ENCODE measurements at regions of chr12 and their contacts with region 1.

Region 1: GRCh38 chr12:51980051-51980808 is 26.5 kb upstream of the TAMALIN start:
- DNase-seq: peak; percentile 70 to 82
- H3K4me3 ChIP-seq: no peak overlapping the region
- H3K4me3 Mint-ChIP-seq: peak overlapping the region; percentile 32
- H3K27ac Mint-ChIP-seq: peak overlapping the region; percentile 87
- H3K4me1 ChIP-seq: peaks cover 52% of the 10 kb centered on the region
- H3K4me1 Mint-ChIP-seq: peaks cover 46% of the 10 kb centered on the region
- H3K27me3 ChIP-seq: no peaks in the 10 kb centered on the region
- H3K27me3 Mint-ChIP-seq: no peaks in the 10 kb centered on the region
- CTCF ChIP-seq: peak; percentile 96 to 97

Region 2: DNA sequence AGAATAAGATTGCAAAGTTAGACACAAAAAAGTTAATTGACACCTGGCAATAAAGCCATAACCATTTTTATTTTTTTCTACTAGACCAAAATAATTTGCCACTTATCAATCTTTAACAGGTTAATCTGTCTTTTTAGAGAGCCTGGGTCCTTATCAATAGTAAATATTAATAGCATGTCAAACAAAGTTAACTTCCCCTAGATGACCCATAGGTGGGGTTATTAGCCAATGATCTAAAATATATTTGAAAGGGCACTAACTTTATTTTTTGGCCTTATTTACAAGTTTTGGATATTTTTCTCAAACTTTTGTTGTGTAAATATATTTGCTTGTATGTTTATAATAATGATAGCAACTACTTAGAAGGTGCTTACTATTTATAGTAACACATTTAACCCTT is 88.4 kb before region 1 on chr12:
- CTCF ChIA-PET with region 1: interaction called, 26 read pairs
- POLR2A ChIA-PET with region 1: interaction called, 11 read pairs
- intact Hi-C with region 1: loop called (anchors 1 kb)
- DNase-seq: no peak
- H3K4me3 ChIP-seq: no peak overlapping the region
- H3K4me3 Mint-ChIP-seq: no peak overlapping the region
- H3K27ac Mint-ChIP-seq: no peak overlapping the region
- H3K4me1 ChIP-seq: peaks cover 13% of the 10 kb centered on the region; the same call in 1 of the 2 replicates
- H3K4me1 Mint-ChIP-seq: peaks cover 7% of the 10 kb centered on the region
- H3K27me3 ChIP-seq: no peaks in the 10 kb centered on the region
- H3K27me3 Mint-ChIP-seq: no peaks in the 10 kb centered on the region
- CTCF ChIP-seq: peak; percentile 54 to 56

Region 3: GRCh38 chr12:51926718-51927117 is 53.5 kb before region 1 on chr12:
- CTCF ChIA-PET with region 1: interaction called, 3 read pairs
- POLR2A ChIA-PET with region 1: no interaction called
- intact Hi-C with region 1: loop called (anchors 1 kb)
- DNase-seq: peak; percentile 69 to 70
- H3K4me3 ChIP-seq: no peak overlapping the region
- H3K4me3 Mint-ChIP-seq: no peak overlapping the region
- H3K27ac Mint-ChIP-seq: no peak overlapping the region
- H3K4me1 ChIP-seq: peaks cover 30% of the 10 kb centered on the region
- H3K4me1 Mint-ChIP-seq: peaks cover 26% of the 10 kb centered on the region
- H3K27me3 ChIP-seq: no peaks in the 10 kb centered on the region
- H3K27me3 Mint-ChIP-seq: no peaks in the 10 kb centered on the region
- CTCF ChIP-seq: peak; percentile 64 to 70

Region 4: GRCh38 chr12:51951199-51951842 is 28.9 kb before region 1 on chr12 and contains the start of gene ACVR1B:
- CTCF ChIA-PET with region 1: interaction called, 5 read pairs
- POLR2A ChIA-PET with region 1: interaction called, 4 read pairs
- intact Hi-C with region 1: loop called (anchors 1 kb)
- DNase-seq: peak; percentile 93 to 94
- H3K4me3 ChIP-seq: peak within 1 kb of the TSS; percentile 72
- H3K4me3 Mint-ChIP-seq: peak within 1 kb of the TSS; percentile 87
- H3K27ac Mint-ChIP-seq: peak within 1 kb of the TSS; percentile 78
- H3K4me1 ChIP-seq: peaks cover 28% of the 10 kb centered on the region
- H3K4me1 Mint-ChIP-seq: peaks cover 33% of the 10 kb centered on the region
- H3K27me3 ChIP-seq: no peaks in the 10 kb centered on the region
- H3K27me3 Mint-ChIP-seq: no peaks in the 10 kb centered on the region
- CTCF ChIP-seq: no peak
- total RNA-seq, gene ACVR1B: 92.7 and 112 TPM in 2 replicates

Region 5: DNA sequence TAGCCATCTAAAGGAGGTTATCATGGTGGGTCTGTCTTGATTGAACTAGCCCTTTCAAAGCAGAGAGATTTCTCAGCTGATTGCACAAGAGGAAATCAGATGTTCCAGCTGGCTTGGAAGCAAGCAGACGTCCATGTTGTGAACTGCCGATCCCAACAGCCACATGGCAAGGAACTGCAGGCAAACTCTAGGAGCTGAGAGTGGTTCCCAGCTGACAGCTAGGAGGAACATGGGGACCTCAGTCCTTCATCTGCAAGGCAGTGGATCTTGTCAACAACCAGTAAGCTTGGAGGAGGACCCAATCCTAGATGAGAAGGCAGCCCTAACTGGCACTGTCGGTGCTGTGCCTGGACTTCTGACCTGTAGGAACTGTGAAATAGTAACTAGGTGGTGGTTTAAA is 21.0 kb before region 1 on chr12:
- CTCF ChIA-PET with region 1: interaction called, 26 read pairs
- POLR2A ChIA-PET with region 1: interaction called, 27 read pairs
- intact Hi-C with region 1: loop called (anchors 1 kb)
- DNase-seq: peak; percentile 54 to 60
- H3K4me3 ChIP-seq: no peak overlapping the region
- H3K4me3 Mint-ChIP-seq: peak overlapping the region; percentile 42
- H3K27ac Mint-ChIP-seq: peak overlapping the region; percentile 77
- H3K4me1 ChIP-seq: peaks cover 84% of the 10 kb centered on the region
- H3K4me1 Mint-ChIP-seq: peaks cover 58% of the 10 kb centered on the region
- H3K27me3 ChIP-seq: no peaks in the 10 kb centered on the region
- H3K27me3 Mint-ChIP-seq: no peaks in the 10 kb centered on the region
- CTCF ChIP-seq: no peak

Region 6: GRCh38 chr12:51994959-51995358 is 14.7 kb after region 1 on chr12:
- CTCF ChIA-PET with region 1: interaction called, 10 read pairs
- POLR2A ChIA-PET with region 1: no interaction called
- intact Hi-C with region 1: no loop called
- DNase-seq: no peak
- H3K4me3 ChIP-seq: no peak overlapping the region
- H3K4me3 Mint-ChIP-seq: no peak overlapping the region
- H3K27ac Mint-ChIP-seq: no peak overlapping the region
- H3K4me1 ChIP-seq: no peaks in the 10 kb centered on the region
- H3K4me1 Mint-ChIP-seq: peaks cover 6% of the 10 kb centered on the region
- H3K27me3 ChIP-seq: no peaks in the 10 kb centered on the region
- H3K27me3 Mint-ChIP-seq: no peaks in the 10 kb centered on the region
- CTCF ChIP-seq: no peak

Region 7: GRCh38 chr12:52062593-52063552 is 82.6 kb after region 1 on chr12:
- CTCF ChIA-PET with region 1: no interaction called
- POLR2A ChIA-PET with region 1: no interaction called
- intact Hi-C with region 1: no loop called
- DNase-seq: no peak
- H3K4me3 ChIP-seq: no peak overlapping the region
- H3K4me3 Mint-ChIP-seq: no peak overlapping the region
- H3K27ac Mint-ChIP-seq: no peak overlapping the region
- H3K4me1 ChIP-seq: no peaks in the 10 kb centered on the region
- H3K4me1 Mint-ChIP-seq: no peaks in the 10 kb centered on the region
- H3K27me3 ChIP-seq: no peaks in the 10 kb centered on the region
- H3K27me3 Mint-ChIP-seq: no peaks in the 10 kb centered on the region
- CTCF ChIP-seq: no peak

Region 8: DNA sequence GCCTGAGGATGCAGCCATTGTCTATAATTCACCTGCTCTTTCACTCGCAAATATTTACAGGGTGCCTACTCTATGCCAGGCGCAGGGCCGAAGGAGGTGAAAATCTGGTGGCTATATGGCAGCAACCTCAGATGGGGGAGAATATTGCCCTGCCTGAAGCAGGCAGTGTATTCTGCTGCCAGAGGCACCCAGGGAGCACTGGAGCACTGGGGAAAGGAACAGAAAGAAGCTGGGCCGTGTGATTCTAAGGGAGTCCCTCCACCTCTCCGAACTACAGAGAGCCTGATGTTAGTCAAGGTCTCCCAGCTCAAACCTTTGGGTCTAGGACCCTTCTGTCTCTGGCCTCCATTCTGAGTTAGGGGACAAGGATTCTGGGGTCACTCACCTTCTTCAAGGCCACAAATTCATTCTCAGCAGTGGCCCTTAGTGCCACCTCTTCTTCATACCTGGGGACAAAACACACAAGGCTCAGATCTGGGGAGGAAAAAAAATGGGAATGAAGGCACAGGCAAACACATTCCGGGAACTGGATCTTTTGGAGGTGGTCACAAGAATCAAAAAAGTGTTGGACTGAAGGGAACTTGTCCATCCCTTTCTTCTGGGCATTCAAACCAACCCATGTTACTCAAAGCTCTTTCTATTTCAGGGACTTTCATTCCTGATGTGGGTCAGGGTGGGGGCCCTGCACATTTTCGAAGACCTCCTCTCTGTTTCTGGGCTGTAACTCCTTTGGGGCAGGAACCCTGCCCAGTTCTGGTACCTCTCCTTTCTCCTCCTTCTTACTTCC is 274.9 kb after region 1 on chr12:
- CTCF ChIA-PET with region 1: no interaction called
- POLR2A ChIA-PET with region 1: interaction called, 17 read pairs
- intact Hi-C with region 1: no loop called
- DNase-seq: no peak
- H3K4me3 ChIP-seq: no peak overlapping the region
- H3K4me3 Mint-ChIP-seq: no peak overlapping the region
- H3K27ac Mint-ChIP-seq: no peak overlapping the region
- H3K4me1 ChIP-seq: no peaks in the 10 kb centered on the region
- H3K4me1 Mint-ChIP-seq: no peaks in the 10 kb centered on the region
- H3K27me3 ChIP-seq: no peaks in the 10 kb centered on the region
- H3K27me3 Mint-ChIP-seq: no peaks in the 10 kb centered on the region
- CTCF ChIP-seq: no peak